ENCODE measurements at regions of chr6 and their contacts with region 1.

Region 1: DNA sequence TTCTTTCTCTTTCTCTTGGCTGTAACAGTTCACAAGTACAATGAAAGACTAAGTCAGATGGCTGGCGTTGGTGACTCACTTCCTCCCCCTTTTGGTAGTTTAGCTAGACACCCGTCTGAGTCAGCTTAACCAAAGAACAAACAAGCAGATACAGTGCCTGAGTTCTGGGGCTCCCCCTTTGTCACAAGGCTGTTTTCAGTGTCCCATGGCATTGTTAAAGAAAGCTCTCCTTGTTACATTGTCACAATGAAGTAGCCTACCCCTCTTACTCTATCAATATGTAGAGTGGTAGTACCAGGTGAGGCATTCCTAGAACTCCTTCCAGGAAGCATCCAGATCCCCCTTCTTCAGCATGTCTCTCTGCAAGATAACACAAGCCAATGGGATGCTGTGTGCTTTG is 38.6 kb downstream of the KIAA0408 start:
- DNase-seq: peak; percentile 89
- H3K4me3 Mint-ChIP-seq: no peak overlapping the region
- H3K27ac Mint-ChIP-seq: peak overlapping the region; percentile 64
- H3K4me1 Mint-ChIP-seq: peaks cover 19% of the 10 kb centered on the region
- H3K27me3 Mint-ChIP-seq: peaks cover 1% of the 10 kb centered on the region

Region 2: DNA sequence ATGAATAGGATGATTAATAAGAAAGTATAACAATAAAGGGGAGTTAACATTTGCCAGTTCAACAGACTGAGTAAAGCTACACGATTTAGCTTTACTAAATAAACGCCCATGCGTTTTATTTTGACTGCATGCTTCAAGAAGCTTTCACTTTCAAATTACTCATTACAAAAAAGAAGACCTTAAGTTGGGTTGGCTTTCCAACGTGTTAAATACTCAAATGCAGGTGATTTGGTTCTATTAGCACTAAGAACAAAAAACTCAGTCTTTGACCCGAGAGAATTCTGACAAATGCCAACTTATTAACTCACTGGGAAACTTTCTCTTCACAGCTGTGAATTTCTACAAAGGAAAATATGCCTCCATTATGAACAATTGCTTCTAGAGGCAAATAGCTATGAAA is 129.1 kb before region 1 on chr6:
- CTCF ChIA-PET with region 1: no interaction called
- POLR2A ChIA-PET with region 1: interaction called, 5 read pairs
- intact Hi-C with region 1: loop called (anchors 1 kb)
- DNase-seq: no peak
- H3K4me3 Mint-ChIP-seq: no peak overlapping the region
- H3K27ac Mint-ChIP-seq: peak overlapping the region; percentile 49
- H3K4me1 Mint-ChIP-seq: peaks cover 45% of the 10 kb centered on the region
- H3K27me3 Mint-ChIP-seq: no peaks in the 10 kb centered on the region

Region 3: DNA sequence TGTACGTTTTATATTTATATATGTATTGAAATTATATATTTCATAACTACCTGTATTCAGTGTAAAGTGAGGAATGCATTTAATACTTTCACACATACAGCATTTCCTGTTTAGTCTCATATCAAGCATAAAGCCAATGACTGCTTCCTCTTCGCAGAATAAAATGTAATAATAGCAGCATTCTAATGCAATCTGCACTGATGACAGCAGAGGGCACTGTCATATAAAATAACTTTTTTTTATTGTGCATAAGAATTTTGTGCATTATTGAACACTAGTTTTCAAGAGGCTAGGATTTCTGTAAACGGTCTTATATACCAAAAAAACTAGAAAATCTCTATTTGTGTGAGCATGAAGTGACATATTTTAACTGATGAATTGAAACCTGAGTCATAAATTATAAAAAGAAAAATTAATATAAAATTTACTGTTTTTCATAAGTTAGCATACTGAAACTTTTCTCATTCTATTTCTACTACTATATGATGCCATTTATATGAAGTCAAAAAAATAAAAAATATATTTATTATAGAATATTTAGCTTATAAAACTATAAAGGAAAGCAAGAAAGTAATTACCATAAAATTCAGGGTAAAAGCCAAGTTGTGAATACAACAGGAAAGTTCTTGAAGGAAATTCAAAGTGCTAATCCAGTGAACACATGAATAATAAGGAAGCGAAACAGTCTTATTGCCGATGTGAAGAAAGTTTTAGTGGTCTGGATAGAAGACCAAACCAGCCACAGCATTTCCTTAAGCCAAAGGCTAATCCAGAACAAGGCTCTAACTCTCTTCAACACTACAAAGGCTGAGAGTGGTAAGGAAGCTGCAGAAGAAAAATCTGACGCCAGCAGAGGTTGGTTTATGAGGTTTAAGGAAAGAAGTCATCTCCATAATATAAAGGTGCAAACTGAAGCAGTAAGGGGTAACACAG is 117.6 kb before region 1 on chr6:
- CTCF ChIA-PET with region 1: interaction called, 4 read pairs
- POLR2A ChIA-PET with region 1: no interaction called
- intact Hi-C with region 1: loop called (anchors 2 kb)
- DNase-seq: peak; percentile 41
- H3K4me3 Mint-ChIP-seq: no peak overlapping the region
- H3K27ac Mint-ChIP-seq: peak overlapping the region; percentile 15
- H3K4me1 Mint-ChIP-seq: peaks cover 32% of the 10 kb centered on the region
- H3K27me3 Mint-ChIP-seq: no peaks in the 10 kb centered on the region

Region 4: GRCh38 chr6:127342946-127343808 is 77.4 kb before region 1 on chr6 and contains the start of gene ECHDC1:
- CTCF ChIA-PET with region 1: interaction called, 5 read pairs
- POLR2A ChIA-PET with region 1: interaction called, 4 read pairs
- intact Hi-C with region 1: loop called (anchors 1 kb)
- DNase-seq: peak; percentile 83
- H3K4me3 Mint-ChIP-seq: no peak within 1 kb of the TSS
- H3K27ac Mint-ChIP-seq: no peak within 1 kb of the TSS
- H3K4me1 Mint-ChIP-seq: peaks cover 7% of the 10 kb centered on the region
- H3K27me3 Mint-ChIP-seq: no peaks in the 10 kb centered on the region
- total RNA-seq, gene ECHDC1: 42.9 to 43.7 TPM

Region 5: DNA sequence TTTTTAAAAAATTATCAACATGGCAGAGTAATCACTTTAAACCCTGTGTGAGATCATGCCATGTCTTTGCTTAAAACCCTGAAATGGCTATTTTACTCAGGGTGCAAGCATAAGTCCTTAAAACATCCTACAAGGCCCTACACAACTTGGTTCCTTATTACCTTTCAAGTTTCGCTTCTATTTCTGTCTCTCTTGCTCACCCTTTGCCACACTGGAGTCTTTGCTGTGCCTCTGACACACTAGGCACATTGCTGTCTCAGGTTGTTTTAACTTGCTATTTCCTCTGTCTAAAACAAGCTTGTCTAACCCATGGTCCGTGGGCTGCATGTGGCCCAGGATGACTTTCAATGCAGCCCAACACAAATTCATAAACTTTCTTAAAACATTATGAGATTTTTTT is 16.9 kb before region 1 on chr6:
- CTCF ChIA-PET with region 1: interaction called, 3 read pairs
- POLR2A ChIA-PET with region 1: interaction called, 3 read pairs
- intact Hi-C with region 1: loop called (anchors 1 kb)
- DNase-seq: peak; percentile 22
- H3K4me3 Mint-ChIP-seq: no peak overlapping the region
- H3K27ac Mint-ChIP-seq: peak overlapping the region; percentile 66
- H3K4me1 Mint-ChIP-seq: peaks cover 17% of the 10 kb centered on the region
- H3K27me3 Mint-ChIP-seq: no peaks in the 10 kb centered on the region

Region 6: DNA sequence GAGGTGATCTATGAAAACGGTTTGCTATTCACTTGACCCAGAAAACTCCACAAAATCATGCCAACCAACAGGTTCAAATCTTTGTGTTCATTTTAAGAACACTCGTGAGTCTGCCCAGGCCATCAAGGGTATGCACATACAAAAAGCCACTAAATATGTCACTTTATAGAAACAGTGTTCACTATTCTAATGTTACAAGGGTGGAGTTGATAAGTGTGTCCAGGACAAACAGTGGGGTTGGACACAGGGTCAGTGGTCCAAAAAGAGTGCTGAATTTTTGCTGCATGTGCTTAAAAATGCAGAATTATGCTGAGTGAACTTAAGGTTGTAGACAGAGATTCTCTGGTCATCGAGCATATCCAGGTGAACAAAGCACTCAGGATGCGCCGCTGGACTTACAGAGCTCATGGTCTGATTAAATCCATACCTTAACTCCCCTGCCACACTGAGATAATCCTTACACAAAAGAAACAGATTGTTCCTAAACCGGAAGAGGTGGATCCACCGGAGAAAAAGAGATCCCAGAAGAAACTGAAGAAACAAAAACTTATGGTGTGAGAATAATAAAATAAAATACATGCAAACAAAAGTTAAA is 15.2 kb after region 1 on chr6:
- CTCF ChIA-PET with region 1: no interaction called
- POLR2A ChIA-PET with region 1: no interaction called
- intact Hi-C with region 1: no loop called
- DNase-seq: no peak
- H3K4me3 Mint-ChIP-seq: no peak overlapping the region
- H3K27ac Mint-ChIP-seq: no peak overlapping the region
- H3K4me1 Mint-ChIP-seq: no peaks in the 10 kb centered on the region
- H3K27me3 Mint-ChIP-seq: peaks cover 11% of the 10 kb centered on the region

Region 7: DNA sequence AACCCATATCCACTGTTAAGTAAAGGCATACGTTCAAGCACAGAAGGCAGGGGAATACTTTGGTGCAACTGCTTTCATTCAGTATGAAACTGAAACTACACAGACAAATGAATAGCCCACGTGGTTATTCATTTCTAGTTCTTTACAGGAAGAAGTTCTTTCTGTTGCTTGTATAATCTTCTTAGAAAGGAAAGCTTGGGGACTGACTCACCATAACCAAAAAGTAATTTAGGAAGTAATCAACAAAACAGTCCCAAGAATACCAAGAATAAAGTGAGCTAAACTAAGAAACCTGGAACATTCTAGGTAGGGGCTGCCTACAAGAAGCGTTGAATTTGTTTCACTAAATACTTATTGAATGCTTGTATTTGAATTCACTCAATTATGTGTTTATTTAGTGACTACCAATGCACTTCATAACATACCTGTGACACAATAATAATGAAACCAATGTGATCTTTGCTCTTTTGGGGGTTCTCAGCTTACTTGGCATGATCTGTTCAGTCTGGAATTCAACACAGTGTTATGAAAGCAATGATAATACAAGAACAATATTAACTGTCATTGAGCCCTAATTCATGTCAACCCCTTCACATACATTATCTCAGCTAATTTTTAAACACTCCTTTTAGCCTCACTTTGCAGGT is 63.8 kb after region 1 on chr6:
- CTCF ChIA-PET with region 1: no interaction called
- POLR2A ChIA-PET with region 1: interaction called, 13 read pairs
- intact Hi-C with region 1: loop called (anchors 1 kb)
- DNase-seq: no peak
- H3K4me3 Mint-ChIP-seq: no peak overlapping the region
- H3K27ac Mint-ChIP-seq: peak overlapping the region; percentile 68
- H3K4me1 Mint-ChIP-seq: peaks cover 28% of the 10 kb centered on the region
- H3K27me3 Mint-ChIP-seq: no peaks in the 10 kb centered on the region

Region 8: GRCh38 chr6:128655978-128656498 is 1235.5 kb after region 1 on chr6:
- CTCF ChIA-PET with region 1: no interaction called
- POLR2A ChIA-PET with region 1: no interaction called
- intact Hi-C with region 1: loop called (anchors 1 kb)
- DNase-seq: peak; percentile 16
- H3K4me3 Mint-ChIP-seq: no peak overlapping the region
- H3K27ac Mint-ChIP-seq: peak overlapping the region; percentile 74
- H3K4me1 Mint-ChIP-seq: peaks cover 31% of the 10 kb centered on the region
- H3K27me3 Mint-ChIP-seq: peaks cover 10% of the 10 kb centered on the region